IMR-90 (cell line): ENCODE measurements at regions of chr6 and their contacts with region 1.

Region 1: DNA sequence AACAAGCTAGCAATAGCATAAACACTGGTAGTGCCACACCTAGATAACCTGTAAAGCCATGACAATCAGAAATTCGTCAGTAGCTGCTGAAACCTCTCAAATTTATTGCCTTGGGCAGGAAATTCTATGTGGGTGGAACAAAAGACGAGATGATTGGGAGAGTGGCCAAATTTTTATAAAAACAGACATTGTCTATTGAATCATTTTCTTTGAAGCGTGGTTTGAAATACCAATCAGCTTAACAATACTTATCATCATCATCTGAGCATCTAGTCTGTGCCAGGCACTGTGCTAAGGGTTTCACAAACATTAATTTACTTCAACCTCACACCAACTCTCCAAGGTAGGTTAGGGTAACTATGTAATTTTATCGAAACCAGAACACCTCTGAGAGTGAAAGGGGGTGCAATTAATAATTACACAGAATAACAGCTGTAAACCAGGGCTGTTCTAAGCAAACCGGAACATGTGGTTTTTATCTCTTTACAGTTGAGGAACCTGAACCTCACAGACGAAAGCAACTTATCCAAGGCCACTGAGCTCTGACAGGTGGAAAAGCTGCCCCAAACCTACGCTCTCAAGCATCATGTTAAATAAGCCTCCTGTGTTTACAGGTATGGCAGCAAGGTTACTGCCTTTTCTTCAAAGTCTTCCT is 43.4 kb downstream of the NHSL1 start:
- DNase-seq: peak; percentile 52
- ATAC-seq: no peak
- H3K4me3 ChIP-seq: no peak overlapping the region
- H3K27ac ChIP-seq: no peak overlapping the region
- H3K4me1 ChIP-seq: 0 out of 2 replicates have a peak, but pooled peaks cover 2% of the 10 kb centered on the region
- H3K27me3 ChIP-seq: no peaks in the 10 kb centered on the region
- CTCF ChIP-seq: no peak
- POLR2A ChIP-seq: no peak
- RAD21 ChIP-seq: no peak

Region 2: GRCh38 chr6:137707590-137708360 is 748.1 kb before region 1 on chr6:
- CTCF ChIA-PET with region 1: no interaction called
- POLR2A ChIA-PET with region 1: no interaction called
- dilution Hi-C with region 1: no loop called
- in situ Hi-C with region 1: no loop called
- intact Hi-C with region 1: no loop called
- DNase-seq: peak; percentile 86
- ATAC-seq: peak; percentile 78
- H3K4me3 ChIP-seq: no peak overlapping the region; the same call in 1 of the 2 replicates
- H3K27ac ChIP-seq: no peak overlapping the region
- H3K4me1 ChIP-seq: no peaks in the 10 kb centered on the region; the same call in 1 of the 2 replicates
- H3K27me3 ChIP-seq: no peaks in the 10 kb centered on the region
- CTCF ChIP-seq: peak; percentile 89
- POLR2A ChIP-seq: no peak
- RAD21 ChIP-seq: peak; percentile 89

Region 3: GRCh38 chr6:137933696-137934095 is 522.2 kb before region 1 on chr6:
- CTCF ChIA-PET with region 1: no interaction called
- POLR2A ChIA-PET with region 1: no interaction called
- dilution Hi-C with region 1: no loop called
- in situ Hi-C with region 1: no loop called
- intact Hi-C with region 1: no loop called
- DNase-seq: peak; percentile 75
- ATAC-seq: peak; percentile 44
- H3K4me3 ChIP-seq: no peak overlapping the region
- H3K27ac ChIP-seq: no peak overlapping the region
- H3K4me1 ChIP-seq: no peaks in the 10 kb centered on the region
- H3K27me3 ChIP-seq: no peaks in the 10 kb centered on the region
- CTCF ChIP-seq: no peak
- POLR2A ChIP-seq: no peak
- RAD21 ChIP-seq: no peak

Region 4: DNA sequence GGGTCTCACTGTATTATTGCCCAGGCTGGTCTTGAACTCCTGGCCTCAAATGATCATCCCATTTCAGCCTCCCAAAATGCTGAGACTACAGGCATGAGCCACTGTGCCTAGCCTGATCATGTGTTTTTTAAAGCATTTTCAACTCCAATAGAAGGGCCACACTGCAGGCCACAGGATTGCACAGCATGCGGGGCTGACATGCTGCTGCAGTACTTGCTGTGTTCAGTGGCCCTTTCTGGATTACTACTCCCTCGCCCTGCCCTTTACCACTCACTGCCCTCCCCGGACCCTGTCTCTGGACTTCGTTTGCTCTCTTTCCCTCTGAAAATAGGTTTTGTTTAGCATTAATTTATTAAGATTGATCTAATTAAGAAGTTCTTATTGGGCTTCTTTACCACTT is 716.3 kb after region 1 on chr6:
- CTCF ChIA-PET with region 1: interaction called, 10 read pairs
- POLR2A ChIA-PET with region 1: no interaction called
- dilution Hi-C with region 1: no loop called
- in situ Hi-C with region 1: no loop called
- intact Hi-C with region 1: no loop called
- DNase-seq: no peak
- ATAC-seq: no peak
- H3K4me3 ChIP-seq: no peak overlapping the region
- H3K27ac ChIP-seq: no peak overlapping the region
- H3K4me1 ChIP-seq: no peaks in the 10 kb centered on the region
- H3K27me3 ChIP-seq: no peaks in the 10 kb centered on the region
- CTCF ChIP-seq: no peak
- POLR2A ChIP-seq: no peak
- RAD21 ChIP-seq: no peak